CD8-positive, alpha-beta T cell (primary cell): ENCODE measurements at regions of chr5 and their contacts with region 1.

Region 1: GRCh38 chr5:157130925-157131324 is 11.7 kb downstream of the MED7 start:
- DNase-seq: no peak
- ATAC-seq: no peak
- H3K4me3 ChIP-seq: no peak overlapping the region
- H3K4me3 Mint-ChIP-seq: no peak overlapping the region
- H3K27ac ChIP-seq: no peak overlapping the region
- H3K27ac Mint-ChIP-seq: no peak overlapping the region
- H3K4me1 ChIP-seq: no peaks in the 10 kb centered on the region
- H3K4me1 Mint-ChIP-seq: peaks cover 26% of the 10 kb centered on the region
- H3K27me3 ChIP-seq: no peaks in the 10 kb centered on the region
- H3K27me3 Mint-ChIP-seq: no peaks in the 10 kb centered on the region
- CTCF ChIP-seq: no peak

Region 2: GRCh38 chr5:155136216-155136850 is 1994.6 kb before region 1 on chr5:
- CTCF ChIA-PET with region 1: no interaction called
- POLR2A ChIA-PET with region 1: no interaction called
- intact Hi-C with region 1: loop called (anchors 2 to 5 kb)
- DNase-seq: no peak
- ATAC-seq: no peak
- H3K4me3 ChIP-seq: no peak overlapping the region
- H3K4me3 Mint-ChIP-seq: no peak overlapping the region
- H3K27ac ChIP-seq: no peak overlapping the region
- H3K27ac Mint-ChIP-seq: no peak overlapping the region
- H3K4me1 ChIP-seq: no peaks in the 10 kb centered on the region
- H3K4me1 Mint-ChIP-seq: peaks cover 2% of the 10 kb centered on the region
- H3K27me3 ChIP-seq: peaks cover 0 to 5% of the 10 kb centered on the region in 2 experiments
- H3K27me3 Mint-ChIP-seq: peaks cover 30% of the 10 kb centered on the region
- CTCF ChIP-seq: no peak

Region 3: DNA sequence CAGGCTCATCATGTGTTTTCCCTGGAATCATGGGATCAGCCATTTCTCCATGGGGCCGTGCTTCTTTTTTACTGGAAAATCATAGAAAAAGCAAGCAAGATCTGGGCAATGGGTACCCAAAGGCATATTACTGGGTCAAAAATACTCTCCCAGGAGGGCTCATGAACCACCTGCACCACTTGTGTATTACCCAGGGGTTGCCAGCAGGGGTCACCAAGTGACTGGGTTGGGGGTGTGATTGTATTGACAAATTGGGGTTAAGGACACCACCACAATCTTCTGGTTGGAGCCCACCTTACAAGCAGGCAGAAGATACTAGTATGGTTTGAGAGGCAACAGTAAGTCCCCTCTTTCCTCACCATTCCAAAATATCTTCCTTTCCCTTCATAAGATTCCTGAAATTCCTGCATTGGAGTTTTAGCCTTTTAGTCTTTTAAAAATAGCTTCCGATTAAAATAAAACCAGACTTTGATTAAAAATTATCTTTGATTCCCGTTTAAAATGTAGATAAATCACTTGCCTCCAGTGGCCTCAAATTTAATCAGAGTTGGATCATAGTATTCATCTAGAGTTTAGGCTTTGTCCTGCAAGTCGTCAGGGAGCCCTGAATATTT is 1514.0 kb before region 1 on chr5:
- CTCF ChIA-PET with region 1: interaction called, 4 read pairs
- POLR2A ChIA-PET with region 1: no interaction called
- intact Hi-C with region 1: loop called in 1 of 2 experiments (anchors 2 kb)
- DNase-seq: peak; percentile 4 to 61 (median 41)
- ATAC-seq: no peak
- H3K4me3 ChIP-seq: no peak overlapping the region
- H3K4me3 Mint-ChIP-seq: no peak overlapping the region
- H3K27ac ChIP-seq: no peak overlapping the region
- H3K27ac Mint-ChIP-seq: no peak overlapping the region
- H3K4me1 ChIP-seq: no peaks in the 10 kb centered on the region
- H3K4me1 Mint-ChIP-seq: no peaks in the 10 kb centered on the region
- H3K27me3 ChIP-seq: no peaks in the 10 kb centered on the region
- H3K27me3 Mint-ChIP-seq: peaks cover 19% of the 10 kb centered on the region
- CTCF ChIP-seq: peak; percentile 32

Region 4: GRCh38 chr5:155943516-155944407 is 1187.2 kb before region 1 on chr5:
- CTCF ChIA-PET with region 1: interaction called, 3 read pairs
- POLR2A ChIA-PET with region 1: no interaction called
- intact Hi-C with region 1: loop called in 1 of 2 experiments (anchors 2 kb)
- DNase-seq: peak in 6 of 9 experiments; percentile 2 to 65 (median 34)
- ATAC-seq: peak; percentile 48
- H3K4me3 ChIP-seq: no peak overlapping the region
- H3K4me3 Mint-ChIP-seq: no peak overlapping the region
- H3K27ac ChIP-seq: no peak overlapping the region
- H3K27ac Mint-ChIP-seq: no peak overlapping the region
- H3K4me1 ChIP-seq: peaks cover 3% of the 10 kb centered on the region
- H3K4me1 Mint-ChIP-seq: peaks cover 5% of the 10 kb centered on the region
- H3K27me3 ChIP-seq: no peaks in the 10 kb centered on the region
- H3K27me3 Mint-ChIP-seq: peaks cover 9% of the 10 kb centered on the region
- CTCF ChIP-seq: peak; percentile 54

Region 5: GRCh38 chr5:156824800-156825199 is 306.1 kb before region 1 on chr5:
- CTCF ChIA-PET with region 1: no interaction called
- POLR2A ChIA-PET with region 1: interaction called, 3 read pairs
- intact Hi-C with region 1: loop called in 1 of 2 experiments (anchors 10 kb)
- DNase-seq: no peak
- ATAC-seq: no peak
- H3K4me3 ChIP-seq: no peak overlapping the region
- H3K4me3 Mint-ChIP-seq: no peak overlapping the region
- H3K27ac ChIP-seq: no peak overlapping the region
- H3K27ac Mint-ChIP-seq: no peak overlapping the region
- H3K4me1 ChIP-seq: no peaks in the 10 kb centered on the region
- H3K4me1 Mint-ChIP-seq: no peaks in the 10 kb centered on the region
- H3K27me3 ChIP-seq: peaks cover 3% of the 10 kb centered on the region in 2 experiments
- H3K27me3 Mint-ChIP-seq: peaks cover 3% of the 10 kb centered on the region
- CTCF ChIP-seq: no peak

Region 6: GRCh38 chr5:156893517-156893916 is 237.4 kb before region 1 on chr5:
- CTCF ChIA-PET with region 1: interaction called, 5 read pairs
- POLR2A ChIA-PET with region 1: no interaction called
- intact Hi-C with region 1: loop called in 1 of 2 experiments (anchors 1 kb)
- DNase-seq: no peak
- ATAC-seq: no peak
- H3K4me3 ChIP-seq: no peak overlapping the region
- H3K4me3 Mint-ChIP-seq: no peak overlapping the region
- H3K27ac ChIP-seq: no peak overlapping the region
- H3K27ac Mint-ChIP-seq: peak overlapping the region; percentile 58
- H3K4me1 ChIP-seq: peaks cover 18% of the 10 kb centered on the region
- H3K4me1 Mint-ChIP-seq: peaks cover 24% of the 10 kb centered on the region
- H3K27me3 ChIP-seq: peaks cover 0 to 3% of the 10 kb centered on the region in 2 experiments
- H3K27me3 Mint-ChIP-seq: no peaks in the 10 kb centered on the region
- CTCF ChIP-seq: no peak

Region 7: GRCh38 chr5:157159209-157159751 is 28.4 kb after region 1 on chr5:
- CTCF ChIA-PET with region 1: no interaction called
- POLR2A ChIA-PET with region 1: no interaction called
- intact Hi-C with region 1: no loop called
- DNase-seq: peak in 6 of 9 experiments; percentile 29 to 72 (median 53)
- ATAC-seq: peak; percentile 81
- H3K4me3 ChIP-seq: no peak overlapping the region
- H3K4me3 Mint-ChIP-seq: peak overlapping the region; percentile 13
- H3K27ac ChIP-seq: peak overlapping the region; percentile 23 to 78
- H3K27ac Mint-ChIP-seq: peak overlapping the region; percentile 58
- H3K4me1 ChIP-seq: peaks cover 38% of the 10 kb centered on the region
- H3K4me1 Mint-ChIP-seq: peaks cover 62% of the 10 kb centered on the region
- H3K27me3 ChIP-seq: no peaks in the 10 kb centered on the region
- H3K27me3 Mint-ChIP-seq: no peaks in the 10 kb centered on the region
- CTCF ChIP-seq: no peak